RWPE1 (cell line): ENCODE measurements at regions of chr17 and their contacts with region 1.

Region 1: DNA sequence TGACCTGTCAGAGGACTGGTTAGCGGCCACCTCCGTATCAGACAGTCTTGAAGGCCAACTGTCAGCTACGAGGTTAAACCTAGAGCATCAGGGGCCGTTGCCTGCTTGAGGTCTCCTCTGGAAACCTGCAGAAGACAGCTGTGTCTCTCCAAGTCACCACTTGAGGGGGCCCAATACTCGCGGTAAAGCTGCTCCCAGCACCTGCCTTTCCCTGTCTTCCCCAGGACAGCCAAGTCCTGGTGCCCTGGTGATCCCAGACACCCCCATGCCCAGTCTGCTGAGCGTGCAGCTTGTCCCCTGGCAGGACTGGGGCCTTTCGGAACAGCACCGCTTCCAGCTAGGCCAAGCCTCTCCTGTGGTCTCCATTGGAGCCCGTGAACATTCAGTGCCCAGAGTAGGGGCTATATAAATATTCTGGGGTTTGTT is 80.1 kb downstream of the DNAH17 start:
- DNase-seq: peak; percentile 83
- H3K27ac ChIP-seq: no peak overlapping the region
- CTCF ChIP-seq: peak; percentile 85

Region 2: GRCh38 chr17:77924757-77925336 is 572.3 kb before region 1 on chr17:
- CTCF ChIA-PET with region 1: no interaction called
- POLR2A ChIA-PET with region 1: no interaction called
- DNase-seq: no peak
- H3K27ac ChIP-seq: no peak overlapping the region
- CTCF ChIP-seq: no peak

Region 3: DNA sequence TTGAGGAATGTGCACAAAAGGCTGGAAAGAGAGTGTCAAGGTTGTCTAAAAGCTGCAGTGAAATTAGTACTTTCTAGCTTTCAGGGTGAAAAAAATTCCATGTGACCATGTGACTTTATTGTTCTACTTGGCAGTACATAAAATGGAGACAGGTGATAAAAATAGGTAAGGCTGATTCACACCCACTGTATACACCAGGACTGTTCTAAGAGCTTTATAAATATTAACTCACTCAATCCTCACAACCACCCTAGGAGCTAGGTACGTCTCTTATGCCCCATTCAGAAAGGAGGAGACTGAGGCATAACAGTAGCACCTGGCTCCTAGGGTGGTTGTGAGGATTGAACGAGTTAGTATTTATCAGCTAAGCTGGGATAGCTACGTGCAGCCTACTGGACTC is 108.3 kb after region 1 on chr17:
- CTCF ChIA-PET with region 1: interaction called, 13 read pairs
- POLR2A ChIA-PET with region 1: interaction called, 4 read pairs
- DNase-seq: no peak
- H3K27ac ChIP-seq: no peak overlapping the region
- CTCF ChIP-seq: no peak

Region 4: GRCh38 chr17:78708510-78708973 is 211.4 kb after region 1 on chr17:
- CTCF ChIA-PET with region 1: interaction called, 36 read pairs
- POLR2A ChIA-PET with region 1: no interaction called
- DNase-seq: peak; percentile 89
- H3K27ac ChIP-seq: no peak overlapping the region
- CTCF ChIP-seq: peak; percentile 96